Endothelial cell of umbilical vein (primary cell): ENCODE measurements at regions of chr1 and their contacts with region 1.

Region 1: GRCh38 chr1:6245086-6245868 is 1.3 kb downstream of the HES3 start:
- DNase-seq: peak; percentile 66
- H3K4me3 ChIP-seq: peak overlapping the region; percentile 5 to 28 (median 15)
- H3K27ac ChIP-seq: no peak overlapping the region
- H3K4me1 ChIP-seq: peaks cover 5% of the 10 kb centered on the region
- H3K27me3 ChIP-seq: peaks cover 33 to 50% of the 10 kb centered on the region in 2 experiments
- CTCF ChIP-seq: peak; percentile 85 to 95
- POLR2A ChIP-seq: no peak

Region 2: GRCh38 chr1:6041432-6042062 is 203.7 kb before region 1 on chr1:
- CTCF ChIA-PET with region 1: interaction called, 33 read pairs
- POLR2A ChIA-PET with region 1: no interaction called
- dilution Hi-C with region 1: no loop called
- intact Hi-C with region 1: loop called (anchors 1 kb)
- DNase-seq: peak; percentile 29
- H3K4me3 ChIP-seq: no peak overlapping the region
- H3K27ac ChIP-seq: no peak overlapping the region
- H3K4me1 ChIP-seq: no peaks in the 10 kb centered on the region
- H3K27me3 ChIP-seq: no peaks in the 10 kb centered on the region
- CTCF ChIP-seq: peak; percentile 73 to 82
- POLR2A ChIP-seq: no peak

Region 3: GRCh38 chr1:6108937-6109614 is 136.2 kb before region 1 on chr1:
- CTCF ChIA-PET with region 1: interaction called, 42 read pairs
- POLR2A ChIA-PET with region 1: no interaction called
- dilution Hi-C with region 1: no loop called
- intact Hi-C with region 1: loop called (anchors 1 kb)
- DNase-seq: peak; percentile 39
- H3K4me3 ChIP-seq: no peak overlapping the region
- H3K27ac ChIP-seq: no peak overlapping the region
- H3K4me1 ChIP-seq: no peaks in the 10 kb centered on the region
- H3K27me3 ChIP-seq: no peaks in the 10 kb centered on the region
- CTCF ChIP-seq: peak; percentile 35 to 77
- POLR2A ChIP-seq: no peak

Region 4: DNA sequence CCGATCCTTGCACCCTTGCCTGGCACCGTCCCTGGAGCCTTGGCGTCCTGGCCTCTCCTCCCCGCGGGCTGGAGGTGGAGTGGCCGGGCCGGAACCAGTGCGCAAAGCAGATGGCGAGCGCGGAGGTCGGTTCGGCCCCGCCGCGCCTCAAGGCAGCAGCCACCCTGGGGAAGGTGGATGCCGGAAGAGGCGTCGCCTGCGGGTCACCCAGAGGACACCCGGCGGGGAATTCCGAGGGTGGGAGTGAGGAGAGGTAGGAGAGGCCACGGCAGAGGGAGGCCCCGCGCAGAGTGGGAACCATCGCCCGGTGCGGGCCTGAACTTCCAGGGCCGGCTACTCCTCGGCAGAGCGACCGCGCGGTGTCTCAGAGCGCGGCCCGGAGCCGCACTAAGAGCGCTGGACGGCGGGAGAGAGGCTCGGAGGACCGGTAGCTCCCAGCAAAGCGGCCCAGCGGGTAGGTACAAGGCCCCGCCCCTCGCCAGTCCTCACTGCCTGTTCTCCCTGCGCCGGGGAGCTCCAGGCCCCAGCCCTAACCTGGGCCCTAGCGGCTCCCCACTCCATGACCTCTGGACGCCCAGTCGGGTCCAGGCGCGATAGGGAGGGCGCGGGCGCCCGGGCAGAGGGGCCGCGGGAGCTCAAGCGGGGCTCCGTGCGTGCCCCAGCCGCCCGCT is 39.3 kb before region 1 on chr1 and contains the start of gene RNF207:
- CTCF ChIA-PET with region 1: interaction called, 32 read pairs
- POLR2A ChIA-PET with region 1: interaction called, 6 read pairs
- dilution Hi-C with region 1: no loop called
- intact Hi-C with region 1: loop called (anchors 1 kb)
- DNase-seq: peak; percentile 18
- H3K4me3 ChIP-seq: peak within 1 kb of the TSS; percentile 23 to 59 (median 38)
- H3K27ac ChIP-seq: peak within 1 kb of the TSS; percentile 43
- H3K4me1 ChIP-seq: peaks cover 22% of the 10 kb centered on the region
- H3K27me3 ChIP-seq: peaks cover 6 to 11% of the 10 kb centered on the region in 2 experiments
- CTCF ChIP-seq: no peak
- POLR2A ChIP-seq: no peak
- total RNA-seq, gene RNF207: 2.4 and 8.2 TPM in 2 replicates

Region 5: DNA sequence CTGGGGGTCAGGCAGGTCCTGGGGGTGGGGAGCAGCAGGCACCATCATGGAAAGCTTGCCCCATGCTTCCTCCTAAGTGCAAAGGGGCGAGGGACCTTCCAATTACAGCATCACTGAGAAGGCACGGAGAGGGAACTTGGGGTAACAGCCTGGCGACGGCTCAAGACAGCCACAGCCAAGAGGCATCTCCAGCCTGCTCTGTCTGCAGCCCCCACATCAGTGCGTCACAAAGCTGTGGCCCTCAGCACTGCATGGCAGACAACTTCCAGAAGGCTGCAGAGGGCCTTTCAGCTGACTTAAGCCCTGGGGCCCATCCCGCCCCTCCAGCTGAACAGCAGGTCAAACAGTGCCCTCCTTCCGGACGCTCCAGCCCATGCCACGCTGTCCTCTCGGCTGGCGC is 28.8 kb after region 1 on chr1:
- CTCF ChIA-PET with region 1: no interaction called
- POLR2A ChIA-PET with region 1: no interaction called
- dilution Hi-C with region 1: no loop called
- intact Hi-C with region 1: no loop called
- DNase-seq: no peak
- H3K4me3 ChIP-seq: no peak overlapping the region
- H3K27ac ChIP-seq: no peak overlapping the region
- H3K4me1 ChIP-seq: no peaks in the 10 kb centered on the region
- H3K27me3 ChIP-seq: no peaks in the 10 kb centered on the region
- CTCF ChIP-seq: no peak
- POLR2A ChIP-seq: no peak

Region 6: DNA sequence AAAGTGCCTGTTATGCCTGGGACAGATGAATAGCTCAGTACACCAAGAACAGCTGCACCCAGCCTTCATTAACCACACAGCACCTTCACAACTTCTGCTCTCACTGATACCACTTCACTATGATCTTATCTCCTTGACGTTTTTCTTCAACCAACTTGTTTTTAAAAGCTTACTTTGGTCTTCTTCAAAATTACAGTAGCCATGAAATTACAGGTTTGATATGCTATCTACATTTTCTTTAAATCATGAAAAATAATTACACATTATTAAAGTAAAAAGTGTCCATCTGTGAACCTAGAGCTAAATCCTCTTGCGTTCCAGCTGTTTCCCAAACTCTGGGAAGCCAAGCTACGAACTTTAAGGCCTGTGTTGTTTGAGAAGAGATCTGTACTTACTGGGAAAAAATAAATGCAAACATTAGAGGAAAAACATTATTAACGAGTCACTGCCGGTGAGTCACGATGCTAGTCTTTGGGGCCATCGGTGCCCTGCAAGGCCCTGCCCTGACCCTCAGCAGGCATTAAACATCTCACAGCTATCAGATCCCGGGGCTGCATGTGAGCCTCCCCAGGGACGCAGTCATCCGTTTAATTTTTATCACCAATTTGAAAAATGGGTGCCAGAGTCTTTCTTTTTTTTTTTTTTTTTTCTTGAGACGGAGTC is 72.0 kb after region 1 on chr1:
- CTCF ChIA-PET with region 1: interaction called, 11 read pairs
- POLR2A ChIA-PET with region 1: no interaction called
- dilution Hi-C with region 1: no loop called
- intact Hi-C with region 1: no loop called
- DNase-seq: peak; percentile 57
- H3K4me3 ChIP-seq: no peak overlapping the region
- H3K27ac ChIP-seq: peak overlapping the region; percentile 21
- H3K4me1 ChIP-seq: peaks cover 12% of the 10 kb centered on the region
- H3K27me3 ChIP-seq: no peaks in the 10 kb centered on the region
- CTCF ChIP-seq: no peak
- POLR2A ChIP-seq: no peak

Region 7: DNA sequence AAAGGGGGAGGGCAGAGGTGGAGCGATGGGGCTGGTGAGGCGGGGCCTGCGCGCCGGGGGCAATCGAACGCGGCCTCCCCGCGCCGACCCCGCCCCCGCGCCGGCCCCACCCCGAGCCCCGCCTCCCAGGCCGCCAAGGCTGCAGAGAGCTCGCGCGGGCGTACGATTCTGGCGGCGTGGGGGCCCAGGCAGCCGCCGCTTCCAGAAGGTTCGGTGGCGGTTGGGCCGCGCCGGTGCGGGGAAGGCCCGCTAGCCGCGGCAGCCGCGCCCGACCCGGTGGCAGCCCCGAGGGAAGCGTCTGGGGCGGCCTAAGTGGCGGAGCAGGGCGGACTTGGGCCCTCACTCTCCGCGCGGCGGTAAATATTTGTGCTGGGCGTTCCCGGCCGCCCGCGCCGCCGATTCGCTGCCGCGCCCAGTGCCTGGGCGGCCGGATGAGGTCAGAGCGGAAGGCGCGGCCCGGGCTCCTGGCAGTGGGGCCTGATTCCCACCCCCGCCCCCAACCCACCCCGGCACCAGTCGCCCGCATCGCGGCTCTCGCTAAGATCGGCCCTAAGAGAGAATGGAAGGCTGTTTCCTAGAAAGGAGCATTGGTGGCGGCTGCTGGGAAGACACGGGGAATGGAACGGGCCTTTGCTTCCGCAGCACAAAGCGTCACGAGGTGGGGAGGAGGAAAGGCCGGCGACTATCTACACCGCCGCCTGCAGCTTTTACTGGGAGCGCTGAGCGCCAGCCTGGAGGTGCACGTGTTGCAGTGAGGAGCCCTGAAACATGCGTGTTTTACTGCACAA is 148.3 kb after region 1 on chr1 and contains the start of gene ACOT7:
- CTCF ChIA-PET with region 1: interaction called, 26 read pairs
- POLR2A ChIA-PET with region 1: no interaction called
- dilution Hi-C with region 1: no loop called
- intact Hi-C with region 1: no loop called
- DNase-seq: peak; percentile 89
- H3K4me3 ChIP-seq: peak within 1 kb of the TSS; percentile 45 to 71 (median 63)
- H3K27ac ChIP-seq: peak within 1 kb of the TSS; percentile 57
- H3K4me1 ChIP-seq: peaks cover 16% of the 10 kb centered on the region
- H3K27me3 ChIP-seq: no peaks in the 10 kb centered on the region
- CTCF ChIP-seq: peak in 1 of 2 donors; percentile 24
- POLR2A ChIP-seq: peak; percentile 44
- total RNA-seq, gene ACOT7: 69.4 and 76.5 TPM in 2 replicates

Region 8: GRCh38 chr1:6438047-6438525 is 192.8 kb after region 1 on chr1:
- CTCF ChIA-PET with region 1: interaction called, 40 read pairs
- POLR2A ChIA-PET with region 1: no interaction called
- dilution Hi-C with region 1: no loop called
- intact Hi-C with region 1: loop called (anchors 1 kb)
- DNase-seq: peak; percentile 57
- H3K4me3 ChIP-seq: no peak overlapping the region
- H3K27ac ChIP-seq: no peak overlapping the region
- H3K4me1 ChIP-seq: no peaks in the 10 kb centered on the region
- H3K27me3 ChIP-seq: peaks cover 0 to 2% of the 10 kb centered on the region in 2 experiments
- CTCF ChIP-seq: peak; percentile 88 to 94
- POLR2A ChIP-seq: no peak